Vagina (tissue), 2 donors: ENCODE measurements at regions of chr9 and their contacts with region 1.

Region 1: DNA sequence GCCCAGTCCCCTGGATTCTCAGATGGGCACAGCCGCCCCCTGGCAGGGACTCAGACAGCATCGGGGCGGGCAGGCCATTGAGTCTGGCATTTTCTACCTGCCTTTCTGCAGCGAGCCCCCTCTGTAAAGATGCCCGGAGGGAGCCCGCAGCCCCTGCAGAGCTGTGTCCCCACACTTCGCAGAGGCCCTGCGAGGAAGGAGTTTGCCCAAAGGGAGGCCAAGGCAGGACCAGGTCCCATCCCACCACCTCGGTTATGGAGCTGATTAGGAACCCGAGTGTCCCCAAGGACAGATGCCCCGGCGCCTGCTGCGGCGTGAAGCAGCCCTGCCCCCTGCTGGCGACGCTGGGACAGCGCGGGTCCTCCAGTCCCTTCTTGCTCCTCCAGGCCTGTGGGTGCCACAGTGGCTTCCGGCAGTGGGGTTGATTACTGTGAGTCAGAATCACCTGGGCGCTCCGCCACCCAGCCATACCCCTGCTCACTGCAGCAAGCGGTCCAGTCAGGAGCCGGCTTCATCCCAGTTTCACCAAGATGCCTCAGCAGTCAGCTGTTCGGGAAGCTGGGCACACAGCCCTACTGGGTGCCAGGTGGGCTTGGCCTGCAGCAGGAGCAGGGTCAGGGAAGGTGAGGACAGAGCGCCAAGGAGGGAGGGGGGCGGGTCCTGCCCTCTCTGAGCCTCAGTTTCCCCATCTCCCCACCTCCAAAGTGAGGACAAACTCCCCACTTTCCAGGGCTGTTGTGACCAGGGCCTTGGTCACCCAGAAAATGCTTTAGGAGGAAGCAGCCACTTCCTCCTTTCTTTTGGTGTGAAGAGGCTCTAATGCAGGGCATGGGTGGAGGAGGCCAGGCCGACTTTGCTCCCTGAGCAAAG is 117.1 kb downstream of the RXRA start:
- DNase-seq: no peak
- H3K4me3 ChIP-seq: no peak overlapping the region
- H3K27ac ChIP-seq: peak overlapping the region; percentile 42
- H3K4me1 ChIP-seq: peaks cover 27% of the 10 kb centered on the region
- H3K27me3 ChIP-seq: no peaks in the 10 kb centered on the region
- CTCF ChIP-seq: peak; percentile 97 to 99 (median 98)
- POLR2A ChIP-seq: no peak

Region 2: DNA sequence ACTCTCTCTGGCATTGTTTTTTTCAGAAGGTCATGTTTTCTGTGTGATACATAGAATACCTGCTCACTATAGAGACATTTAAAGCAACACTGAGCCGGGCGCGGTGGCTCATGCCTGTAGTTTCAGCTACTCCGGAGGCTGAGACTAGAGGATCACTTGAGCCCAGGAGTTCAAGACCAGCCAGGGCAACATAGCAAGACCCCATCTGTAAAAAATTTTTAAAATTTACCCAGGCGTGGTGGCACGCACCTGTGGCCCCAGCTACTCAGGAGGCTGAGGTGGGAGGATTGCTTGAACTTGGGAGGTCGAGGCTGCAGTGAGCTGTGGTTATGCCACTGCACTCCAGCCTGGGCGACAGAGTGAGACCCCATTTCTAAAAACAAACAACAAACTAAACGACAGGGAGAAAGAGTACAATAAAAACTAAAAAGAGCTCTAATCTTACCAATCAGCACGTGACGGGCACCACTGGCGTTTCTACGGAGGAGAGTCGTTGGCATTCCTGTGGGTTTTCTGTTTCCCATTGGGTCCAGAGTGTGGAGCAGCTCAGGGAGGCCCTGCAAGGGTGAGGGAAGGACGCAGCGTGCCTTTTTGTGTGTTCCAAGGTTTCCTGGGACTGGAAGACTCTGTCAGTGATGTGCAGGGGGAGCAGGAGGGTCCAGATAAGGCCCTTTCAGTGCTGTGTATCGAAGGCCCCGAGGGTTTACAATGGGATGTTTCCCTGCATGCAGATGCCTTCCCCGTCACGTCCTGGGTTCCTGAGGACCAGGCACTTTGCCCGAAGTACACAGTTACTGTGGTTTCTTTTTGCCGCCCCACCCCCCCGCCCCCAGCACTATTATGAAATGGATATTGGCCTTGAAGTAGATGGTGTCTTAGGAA is 271.8 kb before region 1 on chr9:
- intact Hi-C with region 1: loop called (anchors 2 kb)
- DNase-seq: no peak
- H3K4me3 ChIP-seq: no peak overlapping the region
- H3K27ac ChIP-seq: no peak overlapping the region
- H3K4me1 ChIP-seq: peaks cover 33% of the 10 kb centered on the region
- H3K27me3 ChIP-seq: no peaks in the 10 kb centered on the region
- CTCF ChIP-seq: no peak
- POLR2A ChIP-seq: no peak